GM10248 (cell line): ENCODE measurements at regions of chr4 and their contacts with region 1.

Region 1: GRCh38 chr4:36351082-36351666 is 69.8 kb downstream of the DTHD1 start:
- DNase-seq: peak; percentile 47
- CTCF ChIP-seq: peak; percentile 80

Region 2: DNA sequence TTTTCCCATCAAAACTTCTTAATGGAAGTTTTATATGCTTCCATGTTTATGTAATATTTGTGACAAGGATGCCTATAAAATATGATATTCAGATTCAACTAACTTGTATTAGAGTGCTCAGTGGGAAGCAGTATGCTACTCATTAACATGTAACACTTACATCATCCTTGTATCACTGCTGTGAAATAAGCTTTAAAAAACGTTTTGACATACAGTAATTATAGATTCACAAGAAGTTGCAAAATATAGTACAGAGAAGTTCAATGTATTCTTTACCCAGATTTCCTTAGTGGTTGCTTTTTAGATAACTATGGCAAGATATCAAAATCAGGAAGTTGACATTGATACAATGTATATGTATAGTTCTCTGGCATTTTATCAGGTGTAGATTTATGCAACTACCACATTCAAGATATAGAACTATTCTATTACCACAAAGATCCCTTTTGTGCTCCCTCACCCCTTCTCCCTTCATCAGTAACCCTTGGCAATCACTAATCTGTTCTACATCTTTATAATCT is 13.4 kb before region 1 on chr4:
- CTCF ChIA-PET with region 1: interaction called, 13 read pairs
- POLR2A ChIA-PET with region 1: no interaction called
- DNase-seq: no peak
- CTCF ChIP-seq: no peak